Left colon (tissue), 2 donors: ENCODE measurements at regions of chr18 and their contacts with region 1.

Region 1: DNA sequence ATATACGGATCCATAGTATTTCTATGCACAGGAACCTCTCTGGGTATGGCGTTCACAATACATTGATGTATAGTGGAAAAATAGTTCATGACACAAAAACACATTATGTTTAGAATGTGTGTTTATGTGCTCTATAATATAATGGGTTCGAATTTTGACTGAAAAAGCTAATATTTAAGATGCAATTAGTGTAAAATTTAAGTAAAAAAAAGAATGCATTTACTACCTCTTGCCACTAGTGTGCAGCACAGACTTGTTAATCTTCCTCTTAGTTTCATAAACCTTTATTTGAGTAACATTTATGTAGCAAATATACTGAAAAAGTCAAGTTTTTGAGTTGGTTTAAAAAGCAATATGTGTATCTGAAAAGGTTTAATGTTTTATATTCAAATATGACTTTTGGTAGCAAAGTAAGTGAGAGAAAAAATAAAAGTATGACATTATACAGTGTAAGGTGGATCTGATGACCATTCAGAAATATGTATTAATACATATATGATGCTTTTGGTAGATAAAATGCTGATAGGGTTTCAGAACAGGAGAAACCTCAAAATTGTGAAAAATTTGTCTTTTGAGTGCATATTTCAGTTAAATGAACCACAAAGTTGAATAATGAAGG is 49.4 kb downstream of the CCDC102B start:
- DNase-seq: no peak
- ATAC-seq: no peak

Region 2: GRCh38 chr18:68803356-68803755 is 44.0 kb before region 1 on chr18:
- intact Hi-C with region 1: no loop called
- DNase-seq: peak; percentile 30 to 40
- ATAC-seq: no peak

Region 3: GRCh38 chr18:70085641-70086040 is 1238.3 kb after region 1 on chr18:
- intact Hi-C with region 1: loop called in 1 of 2 experiments (anchors 5 kb)
- DNase-seq: no peak
- ATAC-seq: no peak